SK-N-SH (cell line): ENCODE measurements at regions of chr14 and their contacts with region 1.

Region 1: GRCh38 chr14:101774006-101774795 is 12.7 kb downstream of the PPP2R5C start:
- DNase-seq: no peak
- H3K4me3 ChIP-seq: no peak overlapping the region
- H3K27ac ChIP-seq: peak overlapping the region in 1 of 2 experiments; percentile 51; a peak in 1 of 4 replicates
- H3K4me1 ChIP-seq: peaks cover 0 to 27% of the 10 kb centered on the region in 2 experiments; a peak in 1 of 4 replicates
- H3K27me3 ChIP-seq: no peaks in the 10 kb centered on the region
- CTCF ChIP-seq: no peak
- EP300 ChIP-seq: no peak
- RAD21 ChIP-seq: no peak

Region 2: DNA sequence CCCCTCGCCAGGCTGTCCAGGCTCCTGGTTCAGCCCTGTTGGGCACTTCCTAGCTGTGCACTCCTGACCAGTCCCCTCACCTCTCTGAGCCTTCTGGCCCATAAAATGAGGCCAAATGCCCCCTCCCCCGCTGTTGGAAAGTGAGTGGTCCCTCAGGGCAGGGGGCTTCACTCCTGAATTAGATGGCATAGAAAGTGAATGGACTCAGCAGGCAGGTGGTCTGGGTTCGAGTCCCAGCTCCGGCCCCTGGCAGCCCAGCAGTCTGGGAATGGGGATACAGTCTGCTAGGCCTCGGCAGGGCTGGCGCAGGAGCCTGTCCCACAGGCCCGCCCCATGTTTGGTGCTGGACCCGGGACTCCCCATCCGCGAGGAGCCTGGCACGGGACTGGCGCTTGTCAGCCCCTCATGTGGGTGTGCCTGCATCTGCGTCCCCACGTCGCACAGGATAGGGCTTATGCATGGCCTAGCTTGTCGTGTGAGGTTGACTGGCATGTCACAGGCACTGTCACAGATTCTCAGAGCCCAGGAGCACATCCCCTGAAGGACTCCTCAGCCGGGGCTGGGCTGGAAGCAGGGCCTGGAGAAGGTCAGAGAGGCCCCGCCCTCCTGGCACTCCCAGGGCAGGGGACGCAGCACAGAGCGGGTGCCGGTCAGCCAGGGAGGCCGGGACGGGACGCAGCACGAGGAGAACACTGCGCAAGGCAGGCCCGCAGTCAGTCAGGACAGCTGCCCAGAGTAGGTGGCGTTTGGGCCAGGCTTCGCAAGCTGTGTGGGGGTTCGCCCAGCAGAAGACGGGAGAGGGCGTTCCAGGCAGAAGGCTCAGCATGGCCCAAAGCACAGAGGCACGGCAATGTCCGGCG is 172.4 kb before region 1 on chr14:
- CTCF ChIA-PET with region 1: no interaction called
- POLR2A ChIA-PET with region 1: no interaction called
- DNase-seq: no peak
- H3K4me3 ChIP-seq: no peak overlapping the region
- H3K27ac ChIP-seq: no peak overlapping the region
- H3K4me1 ChIP-seq: peaks cover 0 to 2% of the 10 kb centered on the region in 2 experiments; a peak in 1 of 4 replicates
- H3K27me3 ChIP-seq: no peaks in the 10 kb centered on the region
- CTCF ChIP-seq: no peak
- EP300 ChIP-seq: no peak
- RAD21 ChIP-seq: no peak

Region 3: GRCh38 chr14:101761032-101761880 is 12.9 kb before region 1 on chr14 and contains the start of gene PPP2R5C:
- CTCF ChIA-PET with region 1: interaction called, 45 read pairs
- POLR2A ChIA-PET with region 1: interaction called, 4 read pairs
- DNase-seq: peak; percentile 96
- H3K4me3 ChIP-seq: peak within 1 kb of the TSS; percentile 84 to 92
- H3K27ac ChIP-seq: peak within 1 kb of the TSS; percentile 94
- H3K4me1 ChIP-seq: peaks cover 3 to 15% of the 10 kb centered on the region in 2 experiments; a peak in 2 of 4 replicates
- H3K27me3 ChIP-seq: no peaks in the 10 kb centered on the region
- CTCF ChIP-seq: no peak
- EP300 ChIP-seq: no peak
- RAD21 ChIP-seq: no peak
- polyA plus RNA-seq, gene PPP2R5C: 43.7 and 61.0 TPM in 2 replicates

Region 4: DNA sequence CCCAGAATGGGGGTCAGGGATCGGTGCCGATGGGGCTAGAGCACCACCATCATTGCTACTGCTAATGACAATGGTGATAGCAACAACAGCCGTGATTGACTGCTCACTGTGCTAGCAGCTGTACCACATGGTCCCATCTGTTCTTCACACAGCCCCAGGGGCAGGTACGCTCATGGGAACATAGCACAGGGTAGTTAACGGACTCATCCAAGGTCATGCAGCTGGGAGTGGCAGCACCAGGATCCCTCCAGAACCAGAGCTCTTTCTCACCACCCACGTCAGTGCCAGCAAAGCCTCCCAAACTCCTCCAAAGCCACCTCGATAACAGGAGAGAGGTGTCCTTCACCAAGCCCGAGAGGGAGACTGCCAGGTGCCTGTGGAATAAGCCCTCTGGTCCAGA is 178.9 kb after region 1 on chr14:
- CTCF ChIA-PET with region 1: interaction called, 31 read pairs
- POLR2A ChIA-PET with region 1: interaction called, 7 read pairs
- DNase-seq: no peak
- H3K4me3 ChIP-seq: no peak overlapping the region
- H3K27ac ChIP-seq: no peak overlapping the region
- H3K4me1 ChIP-seq: peaks cover 0 to 11% of the 10 kb centered on the region in 2 experiments; a peak in 1 of 4 replicates
- H3K27me3 ChIP-seq: no peaks in the 10 kb centered on the region
- CTCF ChIP-seq: no peak
- EP300 ChIP-seq: no peak
- RAD21 ChIP-seq: no peak